Sigmoid colon (tissue), 7 donors: ENCODE measurements at regions of chr17 and their contacts with region 1.

Region 1: DNA sequence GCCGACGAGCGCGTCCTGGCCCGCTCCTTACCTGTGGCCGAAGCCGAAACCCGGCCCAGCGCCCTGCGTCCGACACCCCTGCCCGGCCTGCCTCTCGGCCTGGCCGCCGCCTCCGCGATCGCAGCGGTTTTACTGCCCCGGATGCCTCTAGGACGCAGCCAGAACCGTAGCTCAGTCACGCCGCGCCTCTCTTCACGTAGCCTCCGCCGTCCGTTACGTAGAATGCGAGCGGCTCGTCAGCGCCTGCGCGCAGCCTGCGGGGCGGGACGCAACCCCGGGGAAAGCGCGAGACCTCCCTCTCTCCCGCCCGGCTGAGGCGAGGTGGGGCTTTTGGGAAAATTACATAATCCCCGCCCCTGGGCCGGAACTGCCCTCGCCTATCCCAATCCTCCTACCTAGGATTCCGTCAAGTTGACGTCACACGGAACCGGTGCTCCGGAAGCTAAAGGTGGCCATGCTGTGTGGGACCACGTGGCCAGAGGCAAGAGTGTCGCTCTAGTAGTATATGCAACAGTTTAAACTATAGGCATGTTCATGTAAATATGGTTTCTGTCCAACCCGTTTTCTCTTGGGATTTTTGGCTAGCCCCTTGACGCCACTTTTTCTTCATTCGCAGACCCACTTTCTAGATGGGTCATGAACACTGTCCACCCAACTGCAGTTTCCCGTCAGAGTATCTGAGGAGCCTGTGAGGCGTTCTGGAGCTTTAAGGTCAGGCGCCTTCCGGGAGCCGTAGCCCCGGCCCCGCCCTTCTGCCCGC is at the start of gene CCDC47:
- DNase-seq: peak; percentile 100
- H3K4me3 ChIP-seq: peak within 1 kb of the TSS; percentile 80 to 98 (median 92)
- H3K27ac ChIP-seq: peak within 1 kb of the TSS; percentile 97 to 99 (median 98)
- H3K4me1 ChIP-seq: peaks cover 0 to 52% (median 42%) of the 10 kb centered on the region in 4 donors
- H3K27me3 ChIP-seq: no peaks in the 10 kb centered on the region
- CTCF ChIP-seq: no peak
- EP300 ChIP-seq: peak in 1 of 4 donors; percentile 91
- POLR2A ChIP-seq: peak; percentile 94 to 96
- total RNA-seq, gene CCDC47: 35.7 to 47.1 (median 43.5) TPM

Region 2: DNA sequence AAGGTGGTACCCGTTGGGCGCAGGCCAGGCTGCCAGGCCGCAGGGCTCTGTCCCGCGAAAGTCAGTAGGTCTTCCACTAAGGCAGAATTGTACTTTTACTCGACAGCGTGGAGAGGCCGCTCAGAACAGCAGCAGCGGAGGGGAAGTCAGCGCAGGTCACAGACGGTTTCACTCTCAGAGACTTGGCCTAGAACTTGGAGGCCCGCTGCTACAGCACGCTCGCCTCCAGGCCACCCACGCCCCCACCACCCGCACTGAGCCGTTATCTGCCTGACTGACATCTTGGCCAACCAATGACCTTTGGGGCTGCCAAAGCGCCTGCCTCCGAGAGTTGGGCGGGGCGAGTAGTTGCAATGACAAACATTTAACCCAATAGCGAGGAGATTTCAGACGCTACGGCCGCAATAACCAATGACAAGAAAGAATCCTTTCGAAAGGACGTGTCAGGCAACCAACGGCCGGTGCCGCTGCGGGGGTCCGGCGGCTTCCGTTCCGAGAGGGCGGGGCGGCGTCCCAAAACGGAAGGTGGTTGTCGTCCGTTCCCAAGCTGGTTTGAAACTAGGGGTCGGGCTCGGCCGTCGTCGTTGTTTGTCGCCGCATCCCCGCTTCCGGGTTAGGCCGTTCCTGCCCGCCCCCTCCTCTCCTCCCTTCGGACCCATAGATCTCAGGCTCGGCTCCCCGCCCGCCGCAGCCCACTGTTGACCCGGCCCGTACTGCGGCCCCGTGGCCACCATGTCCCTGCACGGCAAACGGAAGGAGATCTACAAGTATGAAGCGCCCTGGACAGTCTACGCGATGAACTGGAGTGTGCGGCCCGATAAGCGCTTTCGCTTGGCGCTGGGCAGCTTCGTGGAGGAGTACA is 223.4 kb before region 1 on chr17 and contains the start of gene DCAF7:
- intact Hi-C with region 1: no loop called
- DNase-seq: peak; percentile 100
- H3K4me3 ChIP-seq: peak within 1 kb of the TSS; percentile 66 to 95 (median 81)
- H3K27ac ChIP-seq: peak within 1 kb of the TSS; percentile 87 to 95 (median 89)
- H3K4me1 ChIP-seq: peaks cover 0 to 49% (median 43%) of the 10 kb centered on the region in 4 donors
- H3K27me3 ChIP-seq: no peaks in the 10 kb centered on the region
- CTCF ChIP-seq: no peak
- EP300 ChIP-seq: no peak
- POLR2A ChIP-seq: peak; percentile 48 to 57
- total RNA-seq, gene DCAF7: 19.7 to 28.9 (median 23.5) TPM

Region 3: DNA sequence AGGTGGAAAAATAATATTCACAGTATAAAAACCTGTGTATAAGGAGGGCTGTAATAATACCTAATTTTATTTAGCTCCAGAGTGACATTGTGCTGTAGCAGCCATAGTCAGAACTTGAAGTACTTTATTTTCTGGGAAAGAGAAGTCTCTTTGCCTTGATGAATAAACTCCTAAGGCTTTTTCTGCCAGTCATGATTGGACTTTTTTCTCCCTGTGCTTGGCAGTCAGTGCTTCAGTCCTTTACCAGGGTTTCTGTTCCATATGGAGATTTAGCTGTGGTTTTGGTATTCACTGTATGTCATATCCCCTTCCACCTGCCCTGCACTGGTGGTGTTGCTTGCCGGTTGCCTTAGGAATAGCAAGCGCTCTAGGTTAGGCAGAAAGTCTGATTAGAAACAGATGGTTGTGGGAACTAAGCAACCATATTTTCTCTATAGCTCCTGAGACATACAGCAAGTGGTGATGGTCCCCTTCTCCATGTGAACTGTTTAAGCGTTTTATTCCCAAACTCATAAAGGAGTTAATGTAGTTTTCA is 25.1 kb after region 1 on chr17:
- intact Hi-C with region 1: no loop called
- DNase-seq: no peak
- H3K4me3 ChIP-seq: no peak overlapping the region
- H3K27ac ChIP-seq: no peak overlapping the region
- H3K4me1 ChIP-seq: no peaks in the 10 kb centered on the region
- H3K27me3 ChIP-seq: no peaks in the 10 kb centered on the region
- CTCF ChIP-seq: no peak
- EP300 ChIP-seq: no peak
- POLR2A ChIP-seq: no peak

Region 4: DNA sequence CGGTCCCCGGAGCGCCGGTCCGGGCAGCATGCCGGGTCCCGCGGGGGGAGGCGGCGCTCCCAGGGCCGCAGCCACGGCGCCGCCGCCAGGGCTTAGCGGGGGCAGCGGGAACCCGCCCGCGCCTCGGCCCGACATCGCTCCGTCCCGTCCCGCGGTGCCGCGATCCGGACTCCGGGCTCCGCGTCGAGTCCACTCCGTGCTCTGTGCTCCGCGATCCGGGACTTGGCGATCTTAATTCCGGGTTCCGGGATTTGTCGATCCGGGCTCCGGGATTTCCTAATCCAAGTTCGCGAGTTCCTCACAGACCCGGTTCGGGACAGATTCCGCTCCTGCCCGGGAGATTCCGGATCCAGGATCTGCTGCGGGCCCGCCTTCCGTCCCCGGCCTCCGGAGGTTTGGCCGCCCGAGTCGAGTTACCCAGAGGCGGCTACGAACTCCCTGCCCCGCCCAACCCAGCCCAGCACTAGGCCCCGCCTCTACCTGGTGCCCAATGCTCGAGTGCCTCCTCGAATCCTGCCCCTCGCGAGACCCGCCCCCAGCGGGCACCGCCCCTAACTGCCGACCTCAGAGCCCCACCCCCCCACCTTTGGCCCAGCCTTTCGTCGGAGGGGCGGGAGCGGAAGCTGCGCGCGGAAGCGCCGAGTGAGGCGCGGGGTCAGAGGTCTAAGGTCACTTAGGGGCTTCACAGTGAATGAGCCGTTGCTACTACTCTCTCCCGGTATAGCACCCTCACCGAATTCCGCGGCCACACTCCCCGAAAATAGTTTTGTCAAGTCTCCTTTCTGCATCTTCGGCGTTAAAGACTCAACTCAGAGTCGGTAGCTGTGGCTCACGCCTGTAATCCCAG is 69.2 kb after region 1 on chr17 and contains the start of gene SMARCD2:
- intact Hi-C with region 1: loop called (anchors 2 kb)
- DNase-seq: peak; percentile 99
- H3K4me3 ChIP-seq: peak within 1 kb of the TSS; percentile 71 to 95 (median 91)
- H3K27ac ChIP-seq: peak within 1 kb of the TSS; percentile 93 to 99 (median 96)
- H3K4me1 ChIP-seq: peaks cover 3 to 71% (median 57%) of the 10 kb centered on the region in 4 donors
- H3K27me3 ChIP-seq: no peaks in the 10 kb centered on the region
- CTCF ChIP-seq: no peak
- EP300 ChIP-seq: peak in 2 of 4 donors; percentile 48 to 58
- POLR2A ChIP-seq: peak; percentile 33 to 44
- total RNA-seq, gene SMARCD2: 79.7 to 122 (median 105) TPM